Prostate gland (tissue), 2 donors: ENCODE measurements at regions of chr1 and their contacts with region 1.

Region 1: GRCh38 chr1:156510709-156511108 is 10.1 kb upstream of the MEF2D start:
- DNase-seq: peak; percentile 97
- H3K4me3 ChIP-seq: no peak overlapping the region
- H3K27ac ChIP-seq: peak overlapping the region; percentile 85 to 88
- H3K4me1 ChIP-seq: peaks cover 5% of the 10 kb centered on the region
- H3K27me3 ChIP-seq: no peaks in the 10 kb centered on the region
- CTCF ChIP-seq: no peak
- POLR2A ChIP-seq: no peak

Region 2: DNA sequence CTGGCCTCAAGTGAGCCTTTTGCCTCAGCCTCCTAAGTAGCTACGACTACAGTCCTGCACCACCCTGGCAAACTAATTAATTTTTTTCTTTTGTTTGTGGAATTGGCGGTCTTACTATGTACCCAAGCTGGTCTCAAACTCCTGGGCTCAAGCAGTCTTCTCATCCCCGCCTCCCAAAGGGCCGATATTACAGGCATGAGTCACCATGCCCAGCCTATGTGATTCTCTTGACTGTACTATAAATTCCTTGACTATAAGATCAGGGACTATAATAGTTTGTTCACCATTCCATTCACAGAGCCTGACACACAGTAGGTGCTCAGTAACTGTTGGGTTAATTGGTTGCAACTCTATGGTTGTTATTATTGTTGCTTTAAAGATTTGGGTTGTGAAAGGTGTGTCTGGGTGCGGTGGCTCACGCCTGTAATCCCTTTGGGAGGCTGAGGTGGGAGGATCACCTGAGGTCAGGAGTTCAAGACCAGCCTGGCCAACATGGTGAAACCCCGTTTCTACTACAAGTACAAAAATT is 804.6 kb before region 1 on chr1:
- intact Hi-C with region 1: no loop called
- DNase-seq: no peak
- H3K4me3 ChIP-seq: no peak overlapping the region
- H3K27ac ChIP-seq: no peak overlapping the region
- H3K4me1 ChIP-seq: no peaks in the 10 kb centered on the region
- H3K27me3 ChIP-seq: no peaks in the 10 kb centered on the region
- CTCF ChIP-seq: no peak
- POLR2A ChIP-seq: no peak

Region 3: GRCh38 chr1:156129706-156130581 is 380.8 kb before region 1 on chr1:
- intact Hi-C with region 1: no loop called
- DNase-seq: peak; percentile 82
- H3K4me3 ChIP-seq: no peak overlapping the region
- H3K27ac ChIP-seq: peak overlapping the region; percentile 80 to 86
- H3K4me1 ChIP-seq: peaks cover 23% of the 10 kb centered on the region
- H3K27me3 ChIP-seq: no peaks in the 10 kb centered on the region
- CTCF ChIP-seq: peak; percentile 90 to 100 (median 97)
- POLR2A ChIP-seq: peak; percentile 51

Region 4: GRCh38 chr1:156551866-156552265 is 41.2 kb after region 1 on chr1:
- intact Hi-C with region 1: loop called (anchors 5 kb)
- DNase-seq: no peak
- H3K4me3 ChIP-seq: no peak overlapping the region
- H3K27ac ChIP-seq: no peak overlapping the region
- H3K4me1 ChIP-seq: no peaks in the 10 kb centered on the region
- H3K27me3 ChIP-seq: no peaks in the 10 kb centered on the region
- CTCF ChIP-seq: no peak
- POLR2A ChIP-seq: no peak

Region 5: GRCh38 chr1:156571949-156572662 is 61.4 kb after region 1 on chr1 and contains the start of gene IQGAP3:
- intact Hi-C with region 1: loop called (anchors 5 kb)
- DNase-seq: peak; percentile 78
- H3K4me3 ChIP-seq: peak within 1 kb of the TSS; percentile 4 to 25
- H3K27ac ChIP-seq: no peak within 1 kb of the TSS
- H3K4me1 ChIP-seq: no peaks in the 10 kb centered on the region
- H3K27me3 ChIP-seq: no peaks in the 10 kb centered on the region
- CTCF ChIP-seq: peak in 2 of 4 experiments; percentile 10 to 16
- POLR2A ChIP-seq: no peak
- total RNA-seq, gene IQGAP3: 1.5 to 3.0 TPM